ENCODE measurements at regions of chr21 and their contacts with region 1.

Region 1: DNA sequence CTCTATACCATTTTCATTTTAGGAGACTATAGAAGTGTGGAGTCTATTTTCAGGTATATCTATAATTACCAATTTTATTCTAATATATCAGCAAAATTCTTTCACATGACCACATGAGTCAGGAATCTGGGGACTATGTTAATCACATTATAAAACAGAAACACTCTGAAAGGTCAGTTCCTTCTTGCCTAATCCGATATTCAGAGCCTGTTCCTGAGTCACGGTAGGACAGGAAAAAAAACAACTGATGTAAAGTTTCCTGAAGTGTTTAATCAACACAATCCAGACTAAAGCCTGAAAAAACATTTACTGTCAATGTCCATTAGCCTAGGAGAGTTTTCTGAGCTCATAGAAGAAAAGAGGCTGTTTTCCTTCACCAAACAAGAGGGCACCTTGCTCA is 1902.3 kb downstream of the NCAM2 start:
- DNase-seq: peak; percentile 98
- H3K4me3 ChIP-seq: no peak overlapping the region
- H3K27ac ChIP-seq: peak overlapping the region; percentile 99
- H3K4me1 ChIP-seq: peaks cover 37% of the 10 kb centered on the region
- H3K27me3 ChIP-seq: no peaks in the 10 kb centered on the region
- CTCF ChIP-seq: no peak
- POLR2A ChIP-seq: no peak

Region 2: DNA sequence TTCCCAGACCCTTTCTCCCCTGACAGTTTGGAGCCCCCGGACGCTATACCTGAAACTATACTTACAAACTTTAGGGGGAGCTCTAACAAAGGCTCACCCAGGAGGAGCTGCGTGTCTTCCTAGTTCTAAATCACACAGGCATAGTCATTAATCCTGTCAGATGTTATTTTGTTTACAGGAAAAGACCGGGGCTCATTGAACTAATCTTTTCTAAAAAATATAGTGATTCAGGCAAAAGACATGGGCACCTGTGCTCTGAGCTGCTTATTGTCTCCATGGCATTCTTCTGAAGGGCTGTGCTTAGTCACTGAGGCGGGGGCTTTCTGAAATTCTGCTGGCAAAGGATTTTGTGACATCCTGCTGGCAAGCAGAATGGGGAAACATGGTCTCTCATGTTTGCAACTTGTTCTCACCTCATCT is 325.3 kb before region 1 on chr21:
- CTCF ChIA-PET with region 1: interaction called, 5 read pairs
- POLR2A ChIA-PET with region 1: no interaction called
- dilution Hi-C with region 1: no loop called
- intact Hi-C with region 1: loop called (anchors 1 kb)
- DNase-seq: peak; percentile 93
- H3K4me3 ChIP-seq: no peak overlapping the region
- H3K27ac ChIP-seq: no peak overlapping the region
- H3K4me1 ChIP-seq: peaks cover 3% of the 10 kb centered on the region
- H3K27me3 ChIP-seq: no peaks in the 10 kb centered on the region
- CTCF ChIP-seq: peak; percentile 49 to 51
- POLR2A ChIP-seq: no peak

Region 3: GRCh38 chr21:22711636-22712035 is 188.9 kb before region 1 on chr21:
- CTCF ChIA-PET with region 1: no interaction called
- POLR2A ChIA-PET with region 1: no interaction called
- dilution Hi-C with region 1: no loop called
- intact Hi-C with region 1: loop called (anchors 1 kb)
- DNase-seq: peak; percentile 83
- H3K4me3 ChIP-seq: no peak overlapping the region
- H3K27ac ChIP-seq: peak overlapping the region; percentile 73
- H3K4me1 ChIP-seq: peaks cover 30% of the 10 kb centered on the region
- H3K27me3 ChIP-seq: no peaks in the 10 kb centered on the region
- CTCF ChIP-seq: no peak
- POLR2A ChIP-seq: no peak

Region 4: DNA sequence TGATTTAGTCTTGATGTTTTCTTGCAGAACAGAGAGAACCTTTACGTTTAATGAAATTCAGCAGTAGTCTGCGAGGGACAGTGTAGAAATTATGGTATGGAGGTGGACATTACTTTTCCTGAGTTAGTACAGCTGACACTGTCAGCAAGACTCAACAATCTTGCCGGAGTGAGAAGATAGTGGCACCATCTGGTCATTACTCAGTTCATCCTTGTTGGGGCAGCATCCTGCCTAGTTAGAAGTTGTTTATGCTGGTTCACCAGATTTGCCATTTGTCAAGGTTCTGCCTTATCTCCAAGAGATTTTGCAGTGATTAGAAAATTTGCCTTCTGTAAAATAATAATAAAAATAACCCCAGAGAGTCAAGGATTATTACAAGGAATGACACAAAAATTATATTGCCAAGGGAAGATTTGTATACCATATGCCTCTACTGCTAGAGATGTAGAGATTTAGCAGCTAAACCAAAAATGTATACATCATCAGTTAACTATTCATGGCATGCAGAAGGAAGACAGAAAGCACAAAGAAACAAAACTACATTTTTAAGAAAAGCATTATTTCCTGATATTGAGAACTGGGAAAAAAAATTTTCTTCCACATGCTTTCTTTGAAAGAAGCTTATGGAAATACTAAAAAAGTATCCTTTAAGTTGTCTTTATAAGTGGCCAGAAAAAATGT is 65.1 kb after region 1 on chr21:
- CTCF ChIA-PET with region 1: no interaction called
- POLR2A ChIA-PET with region 1: no interaction called
- dilution Hi-C with region 1: no loop called
- intact Hi-C with region 1: loop called (anchors 5 kb)
- DNase-seq: peak; percentile 23
- H3K4me3 ChIP-seq: no peak overlapping the region
- H3K27ac ChIP-seq: no peak overlapping the region
- H3K4me1 ChIP-seq: no peaks in the 10 kb centered on the region
- H3K27me3 ChIP-seq: no peaks in the 10 kb centered on the region
- CTCF ChIP-seq: no peak
- POLR2A ChIP-seq: no peak

Region 5: GRCh38 chr21:23016405-23017016 is 116.0 kb after region 1 on chr21:
- CTCF ChIA-PET with region 1: interaction called, 15 read pairs
- POLR2A ChIA-PET with region 1: no interaction called
- dilution Hi-C with region 1: no loop called
- intact Hi-C with region 1: loop called (anchors 1 kb)
- DNase-seq: peak; percentile 83
- H3K4me3 ChIP-seq: no peak overlapping the region
- H3K27ac ChIP-seq: peak overlapping the region; percentile 98
- H3K4me1 ChIP-seq: peaks cover 36% of the 10 kb centered on the region
- H3K27me3 ChIP-seq: no peaks in the 10 kb centered on the region
- CTCF ChIP-seq: peak; percentile 59 to 65
- POLR2A ChIP-seq: no peak

Region 6: DNA sequence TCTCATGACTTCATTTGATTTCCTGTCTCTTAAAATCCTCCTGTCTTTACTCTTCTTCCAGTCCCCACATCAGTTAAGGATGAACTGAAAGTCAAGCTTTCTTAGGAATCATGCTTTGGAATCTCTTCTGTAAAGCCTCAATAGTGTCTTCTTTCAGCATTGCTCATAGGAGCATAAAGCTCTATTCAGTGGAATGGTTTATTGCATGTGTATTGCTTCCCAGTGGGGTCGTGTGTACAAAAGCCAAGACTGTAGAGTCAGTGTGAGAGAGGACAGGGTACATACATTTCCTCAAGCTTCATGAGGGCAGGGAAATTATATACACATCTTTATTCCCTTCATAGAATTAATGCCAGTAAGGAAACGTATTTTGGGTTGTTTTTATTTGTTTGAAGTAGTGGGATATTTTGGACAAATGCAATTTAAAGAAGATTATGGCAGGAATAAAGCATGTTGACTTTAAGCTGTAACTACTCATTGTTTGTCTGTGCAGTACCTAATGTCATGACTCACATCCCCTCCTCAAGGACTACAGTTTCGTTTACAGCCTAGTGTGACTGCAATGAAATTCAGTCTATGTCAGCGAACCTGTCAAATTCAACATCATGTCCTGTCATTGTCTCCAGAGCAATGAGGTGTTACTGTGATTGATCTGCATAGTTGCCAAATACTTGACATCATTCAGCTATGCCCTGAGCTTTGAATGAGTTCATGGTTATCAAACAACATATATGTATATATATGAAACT is 261.9 kb after region 1 on chr21:
- CTCF ChIA-PET with region 1: no interaction called
- POLR2A ChIA-PET with region 1: no interaction called
- dilution Hi-C with region 1: no loop called
- intact Hi-C with region 1: loop called (anchors 1 kb)
- DNase-seq: peak; percentile 94
- H3K4me3 ChIP-seq: no peak overlapping the region
- H3K27ac ChIP-seq: peak overlapping the region; percentile 89
- H3K4me1 ChIP-seq: peaks cover 18% of the 10 kb centered on the region
- H3K27me3 ChIP-seq: no peaks in the 10 kb centered on the region
- CTCF ChIP-seq: no peak
- POLR2A ChIP-seq: no peak

Region 7: DNA sequence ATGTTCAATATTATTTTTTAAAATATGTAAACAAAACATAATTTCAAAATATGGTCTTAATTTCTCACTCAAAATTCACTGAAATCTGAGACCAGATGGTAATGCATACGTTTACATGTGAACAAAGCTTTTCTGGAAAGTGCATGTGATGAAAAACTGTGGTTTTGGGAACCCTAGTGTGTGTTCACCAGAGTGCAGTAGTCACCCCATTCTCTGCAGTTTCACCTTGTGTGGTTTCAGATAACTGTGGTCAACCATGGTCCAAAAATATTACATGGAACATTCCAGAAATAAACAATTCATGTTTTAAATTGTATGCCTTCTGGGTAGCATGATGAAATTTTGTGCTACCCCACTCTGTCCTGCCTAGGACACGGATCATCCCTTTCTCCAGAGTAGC is 684.9 kb after region 1 on chr21:
- CTCF ChIA-PET with region 1: no interaction called
- POLR2A ChIA-PET with region 1: no interaction called
- dilution Hi-C with region 1: no loop called
- intact Hi-C with region 1: no loop called
- DNase-seq: no peak
- H3K4me3 ChIP-seq: no peak overlapping the region
- H3K27ac ChIP-seq: no peak overlapping the region
- H3K4me1 ChIP-seq: no peaks in the 10 kb centered on the region
- H3K27me3 ChIP-seq: no peaks in the 10 kb centered on the region
- CTCF ChIP-seq: no peak
- POLR2A ChIP-seq: no peak

Region 8: GRCh38 chr21:24045775-24046215 is 1145.3 kb after region 1 on chr21:
- CTCF ChIA-PET with region 1: no interaction called
- POLR2A ChIA-PET with region 1: no interaction called
- dilution Hi-C with region 1: no loop called
- intact Hi-C with region 1: loop called (anchors 5 kb)
- DNase-seq: peak; percentile 98
- H3K4me3 ChIP-seq: no peak overlapping the region
- H3K27ac ChIP-seq: peak overlapping the region; percentile 55
- H3K4me1 ChIP-seq: peaks cover 15% of the 10 kb centered on the region
- H3K27me3 ChIP-seq: no peaks in the 10 kb centered on the region
- CTCF ChIP-seq: peak; percentile 44 to 46
- POLR2A ChIP-seq: no peak